Activated CD4-positive, alpha-beta memory T cell treated with anti-CD3 and anti-CD28 coated beads, Interleukin-2, amount 10 ng/mL, durations not matched to agents 7 days and 5 days (primary cell): ENCODE measurements at regions of chr6 and their contacts with region 1.

Region 1: GRCh38 chr6:30828027-30828960 is 56.0 kb upstream of the DDR1 start:
- DNase-seq: peak; percentile 79
- H3K4me3 Mint-ChIP-seq: peak overlapping the region; percentile 86
- H3K27ac Mint-ChIP-seq: peak overlapping the region; percentile 66
- H3K4me1 Mint-ChIP-seq: peaks cover 57% of the 10 kb centered on the region
- H3K27me3 Mint-ChIP-seq: no peaks in the 10 kb centered on the region

Region 2: DNA sequence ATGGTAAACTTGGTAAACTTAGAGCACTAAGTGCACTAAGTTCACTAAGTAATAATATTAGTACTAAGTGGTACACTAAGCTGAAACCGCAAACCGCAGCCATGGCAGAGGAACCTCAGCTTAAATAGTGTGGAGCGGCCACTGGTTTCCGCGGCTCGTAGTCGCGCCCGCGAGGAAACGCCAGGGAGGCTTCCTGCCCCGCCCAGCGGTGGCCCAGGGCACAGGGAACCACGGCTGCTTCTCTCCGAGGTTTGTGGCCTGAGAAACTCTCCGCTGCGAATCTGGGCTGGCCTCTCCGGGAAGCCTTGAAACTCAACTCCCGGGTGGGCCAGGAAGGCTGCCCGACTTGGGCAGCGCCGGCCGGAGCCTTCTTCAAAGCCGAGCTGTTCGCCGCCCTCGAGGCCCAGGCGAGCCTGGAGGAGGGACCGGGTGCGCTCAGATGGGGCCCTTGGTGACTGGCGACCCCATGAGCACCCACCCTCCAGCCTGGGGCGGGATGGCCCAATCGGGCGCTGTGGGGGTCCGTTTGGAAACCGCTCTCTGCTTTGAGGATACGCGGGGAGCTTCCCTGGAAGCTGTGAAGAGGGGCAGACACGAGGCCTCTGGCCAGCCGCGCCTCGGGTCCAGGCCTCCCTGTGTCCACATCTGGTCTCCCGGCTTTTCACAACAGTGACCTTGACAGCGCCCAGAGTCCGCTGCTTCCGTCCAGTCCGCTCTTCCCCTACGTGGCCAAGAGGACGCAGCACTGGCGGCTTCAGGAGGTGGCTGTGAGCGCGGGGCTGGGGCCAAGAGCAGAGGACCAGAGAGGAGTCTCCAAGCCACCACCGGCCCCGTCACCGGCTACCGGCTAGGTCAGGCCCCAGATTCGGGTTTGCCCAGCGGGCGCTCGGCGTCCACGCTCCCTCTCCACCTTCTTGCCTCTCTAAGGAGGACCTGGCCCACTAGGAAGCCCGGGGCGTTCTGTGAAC is 364.4 kb before region 1 on chr6:
- CTCF ChIA-PET with region 1: no interaction called
- POLR2A ChIA-PET with region 1: no interaction called
- DNase-seq: peak; percentile 83
- H3K4me3 Mint-ChIP-seq: no peak overlapping the region
- H3K27ac Mint-ChIP-seq: no peak overlapping the region
- H3K4me1 Mint-ChIP-seq: peaks cover 37% of the 10 kb centered on the region
- H3K27me3 Mint-ChIP-seq: peaks cover 87% of the 10 kb centered on the region

Region 3: GRCh38 chr6:30790760-30791271 is 37.5 kb before region 1 on chr6:
- CTCF ChIA-PET with region 1: interaction called, 10 read pairs
- POLR2A ChIA-PET with region 1: interaction called, 3 read pairs
- DNase-seq: no peak
- H3K4me3 Mint-ChIP-seq: no peak overlapping the region
- H3K27ac Mint-ChIP-seq: no peak overlapping the region
- H3K4me1 Mint-ChIP-seq: peaks cover 53% of the 10 kb centered on the region
- H3K27me3 Mint-ChIP-seq: peaks cover 5% of the 10 kb centered on the region

Region 4: DNA sequence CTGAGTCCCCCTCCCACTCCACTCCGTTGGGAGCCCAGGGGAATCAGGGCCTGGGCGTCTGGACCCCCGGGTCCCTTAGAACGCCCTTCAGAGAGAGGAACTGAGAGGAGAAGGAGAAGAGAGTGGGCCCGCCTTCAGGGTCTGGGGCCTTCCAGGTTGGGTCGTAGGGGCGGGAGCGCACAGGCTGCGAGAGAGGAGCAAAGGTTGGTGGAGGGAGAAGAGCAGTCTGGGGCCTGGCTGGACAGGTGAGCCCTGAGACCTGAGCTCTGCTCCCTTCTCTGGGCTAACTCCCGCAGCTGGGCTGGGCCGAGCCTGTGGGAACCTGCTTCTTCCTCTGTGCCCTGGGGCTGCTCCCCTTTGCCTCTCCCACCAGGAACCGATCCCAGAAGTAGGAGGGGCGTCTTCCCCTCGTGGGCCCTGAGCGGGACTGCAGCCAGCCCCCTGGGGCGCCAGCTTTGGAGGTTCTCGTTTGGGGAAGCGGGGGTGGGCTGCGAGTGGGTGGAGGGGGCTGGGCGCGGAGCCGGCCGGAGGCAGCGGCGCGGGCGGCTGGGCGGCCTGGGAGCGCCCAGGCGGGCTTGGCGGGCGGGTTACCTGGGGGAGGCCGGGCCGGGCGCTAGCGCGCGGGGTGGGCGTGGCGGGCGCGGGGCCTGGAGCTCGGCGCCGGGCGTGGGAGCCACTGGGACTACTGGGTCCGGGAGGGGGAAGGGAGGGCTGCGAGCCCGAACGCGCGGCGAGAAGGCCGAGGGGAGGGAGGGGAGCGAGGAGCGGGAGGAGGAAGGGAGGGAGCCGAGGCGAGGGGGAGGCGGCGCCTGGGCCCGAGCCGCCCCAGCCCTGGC is 55.6 kb after region 1 on chr6 and contains the start of gene DDR1:
- CTCF ChIA-PET with region 1: interaction called, 82 read pairs
- POLR2A ChIA-PET with region 1: no interaction called
- DNase-seq: peak; percentile 44
- H3K4me3 Mint-ChIP-seq: peak within 1 kb of the TSS; percentile 66
- H3K27ac Mint-ChIP-seq: no peak within 1 kb of the TSS
- H3K4me1 Mint-ChIP-seq: peaks cover 14% of the 10 kb centered on the region
- H3K27me3 Mint-ChIP-seq: peaks cover 35% of the 10 kb centered on the region
- total RNA-seq, gene DDR1: 1.8 to 3.2 TPM

Region 5: GRCh38 chr6:30914076-30914853 is 86.0 kb after region 1 on chr6 and contains the start of gene VARS2:
- CTCF ChIA-PET with region 1: interaction called, 22 read pairs
- POLR2A ChIA-PET with region 1: interaction called, 3 read pairs
- DNase-seq: peak; percentile 90
- H3K4me3 Mint-ChIP-seq: peak within 1 kb of the TSS; percentile 87
- H3K27ac Mint-ChIP-seq: peak within 1 kb of the TSS; percentile 83
- H3K4me1 Mint-ChIP-seq: peaks cover 29% of the 10 kb centered on the region
- H3K27me3 Mint-ChIP-seq: no peaks in the 10 kb centered on the region
- total RNA-seq, gene VARS2: 33.6 to 37.0 TPM

Region 6: DNA sequence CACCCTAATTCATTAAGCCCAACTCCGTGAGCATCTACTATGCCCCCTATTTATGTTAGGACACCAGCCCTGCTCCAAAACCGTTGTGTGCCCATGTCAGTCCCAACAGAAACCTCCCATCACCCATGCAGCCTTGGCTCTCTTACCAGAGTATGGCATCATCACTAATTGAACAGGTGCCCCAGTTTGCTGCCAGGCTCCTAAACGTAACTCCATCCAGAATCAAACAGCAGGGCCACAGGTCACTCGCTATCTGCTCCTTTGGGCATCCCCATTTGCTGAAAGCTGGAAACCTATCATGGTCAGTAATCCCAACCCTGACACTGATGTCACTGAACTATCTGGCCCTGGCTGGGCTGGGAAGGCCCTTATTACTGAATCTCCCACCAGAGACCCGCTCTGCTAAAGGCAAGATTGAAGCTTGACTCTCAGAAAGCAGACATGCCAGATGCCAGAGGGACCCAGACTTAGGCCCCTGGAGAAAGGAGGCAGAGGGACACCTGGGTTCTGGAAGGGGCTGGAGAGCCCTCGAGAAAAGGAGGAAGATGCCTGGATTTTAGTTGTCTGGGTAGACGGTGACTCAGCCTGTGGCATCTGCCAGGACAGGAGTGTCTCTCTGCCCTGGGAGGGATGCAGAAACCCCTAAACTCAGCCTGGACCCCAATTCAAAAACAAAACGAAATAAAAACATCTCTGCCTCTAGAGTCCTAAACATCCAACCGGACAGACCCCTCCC is 126.5 kb after region 1 on chr6:
- CTCF ChIA-PET with region 1: no interaction called
- POLR2A ChIA-PET with region 1: no interaction called
- DNase-seq: no peak
- H3K4me3 Mint-ChIP-seq: peak overlapping the region; percentile 14
- H3K27ac Mint-ChIP-seq: no peak overlapping the region
- H3K4me1 Mint-ChIP-seq: peaks cover 8% of the 10 kb centered on the region
- H3K27me3 Mint-ChIP-seq: peaks cover 82% of the 10 kb centered on the region

Region 7: DNA sequence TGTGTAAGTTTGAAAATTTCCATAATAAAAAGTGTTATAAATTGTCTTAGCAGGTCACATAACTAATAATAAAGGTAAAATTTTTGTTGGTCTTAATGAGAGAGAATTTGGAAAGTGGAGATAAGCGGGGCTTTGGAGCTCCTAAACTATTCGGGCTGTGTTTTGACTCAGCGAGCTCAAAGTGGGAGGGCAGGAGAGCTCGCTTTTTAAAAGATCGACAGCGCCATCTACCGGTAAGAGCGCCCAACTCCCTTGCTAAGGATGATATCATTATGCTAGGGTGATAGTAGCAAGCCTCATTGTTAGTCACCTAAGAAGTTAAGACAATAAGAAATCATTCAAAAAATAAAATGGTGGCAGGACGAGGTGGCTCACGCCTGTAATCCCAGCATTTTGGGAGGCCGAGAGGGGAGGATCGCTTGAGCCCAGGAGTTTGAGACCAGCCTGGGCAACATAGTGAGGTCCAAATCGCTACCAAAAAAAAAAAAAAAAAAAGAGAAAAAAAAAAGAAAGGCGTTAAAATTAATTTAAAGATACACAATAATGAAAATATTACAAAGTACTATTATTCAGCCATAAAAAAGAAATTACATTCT is 259.3 kb after region 1 on chr6:
- CTCF ChIA-PET with region 1: interaction called, 29 read pairs
- POLR2A ChIA-PET with region 1: no interaction called
- DNase-seq: peak; percentile 88
- H3K4me3 Mint-ChIP-seq: no peak overlapping the region
- H3K27ac Mint-ChIP-seq: no peak overlapping the region
- H3K4me1 Mint-ChIP-seq: peaks cover 15% of the 10 kb centered on the region
- H3K27me3 Mint-ChIP-seq: peaks cover 14% of the 10 kb centered on the region